ENCODE measurements at regions of chr3 and their contacts with region 1.

Region 1: GRCh38 chr3:156816800-156817645 is 9.1 kb upstream of the LEKR1 start:
- DNase-seq: peak; percentile 94
- ATAC-seq: peak; percentile 85
- H3K4me3 ChIP-seq: peak overlapping the region; percentile 42 to 86 (median 77)
- H3K4me3 Mint-ChIP-seq: peak overlapping the region; percentile 97
- H3K27ac ChIP-seq: peak overlapping the region; percentile 56 to 80
- H3K27ac Mint-ChIP-seq: peak overlapping the region; percentile 99
- H3K4me1 ChIP-seq: peaks cover 13 to 16% of the 10 kb centered on the region in 2 donors
- H3K4me1 Mint-ChIP-seq: peaks cover 43% of the 10 kb centered on the region
- H3K27me3 ChIP-seq: no peaks in the 10 kb centered on the region
- H3K27me3 Mint-ChIP-seq: no peaks in the 10 kb centered on the region
- CTCF ChIP-seq: no peak

Region 2: GRCh38 chr3:155854141-155854940 is 962.7 kb before region 1 on chr3 and contains the start of gene SLC33A1:
- CTCF ChIA-PET with region 1: no interaction called
- POLR2A ChIA-PET with region 1: no interaction called
- intact Hi-C with region 1: loop called (anchors 1 kb)
- DNase-seq: peak; percentile 100
- ATAC-seq: peak; percentile 90
- H3K4me3 ChIP-seq: peak within 1 kb of the TSS; percentile 82 to 99 (median 92)
- H3K4me3 Mint-ChIP-seq: peak within 1 kb of the TSS; percentile 97
- H3K27ac ChIP-seq: peak within 1 kb of the TSS; percentile 90 to 97
- H3K27ac Mint-ChIP-seq: peak within 1 kb of the TSS; percentile 99
- H3K4me1 ChIP-seq: peaks cover 25 to 37% of the 10 kb centered on the region in 2 donors
- H3K4me1 Mint-ChIP-seq: peaks cover 36% of the 10 kb centered on the region
- H3K27me3 ChIP-seq: no peaks in the 10 kb centered on the region
- H3K27me3 Mint-ChIP-seq: no peaks in the 10 kb centered on the region
- CTCF ChIP-seq: no peak
- total RNA-seq, gene SLC33A1: 26.9 and 29.4 TPM in 2 replicates

Region 3: GRCh38 chr3:155870133-155870944 is 946.7 kb before region 1 on chr3 and contains the start of gene GMPS:
- CTCF ChIA-PET with region 1: interaction called, 3 read pairs
- POLR2A ChIA-PET with region 1: no interaction called
- intact Hi-C with region 1: loop called (anchors 2 kb)
- DNase-seq: peak; percentile 96
- ATAC-seq: peak; percentile 95
- H3K4me3 ChIP-seq: peak within 1 kb of the TSS; percentile 65 to 95 (median 93)
- H3K4me3 Mint-ChIP-seq: peak within 1 kb of the TSS; percentile 96
- H3K27ac ChIP-seq: peak within 1 kb of the TSS; percentile 75 to 86
- H3K27ac Mint-ChIP-seq: peak within 1 kb of the TSS; percentile 94
- H3K4me1 ChIP-seq: peaks cover 14 to 19% of the 10 kb centered on the region in 2 donors
- H3K4me1 Mint-ChIP-seq: peaks cover 23% of the 10 kb centered on the region
- H3K27me3 ChIP-seq: no peaks in the 10 kb centered on the region
- H3K27me3 Mint-ChIP-seq: no peaks in the 10 kb centered on the region
- CTCF ChIP-seq: peak; percentile 45
- total RNA-seq, gene GMPS: 28.0 and 30.8 TPM in 2 replicates

Region 4: GRCh38 chr3:156772581-156773206 is 44.3 kb before region 1 on chr3:
- CTCF ChIA-PET with region 1: no interaction called
- POLR2A ChIA-PET with region 1: no interaction called
- intact Hi-C with region 1: no loop called
- DNase-seq: no peak
- ATAC-seq: no peak
- H3K4me3 ChIP-seq: no peak overlapping the region
- H3K4me3 Mint-ChIP-seq: no peak overlapping the region
- H3K27ac ChIP-seq: no peak overlapping the region
- H3K27ac Mint-ChIP-seq: no peak overlapping the region
- H3K4me1 ChIP-seq: no peaks in the 10 kb centered on the region
- H3K4me1 Mint-ChIP-seq: no peaks in the 10 kb centered on the region
- H3K27me3 ChIP-seq: no peaks in the 10 kb centered on the region
- H3K27me3 Mint-ChIP-seq: no peaks in the 10 kb centered on the region
- CTCF ChIP-seq: no peak

Region 5: DNA sequence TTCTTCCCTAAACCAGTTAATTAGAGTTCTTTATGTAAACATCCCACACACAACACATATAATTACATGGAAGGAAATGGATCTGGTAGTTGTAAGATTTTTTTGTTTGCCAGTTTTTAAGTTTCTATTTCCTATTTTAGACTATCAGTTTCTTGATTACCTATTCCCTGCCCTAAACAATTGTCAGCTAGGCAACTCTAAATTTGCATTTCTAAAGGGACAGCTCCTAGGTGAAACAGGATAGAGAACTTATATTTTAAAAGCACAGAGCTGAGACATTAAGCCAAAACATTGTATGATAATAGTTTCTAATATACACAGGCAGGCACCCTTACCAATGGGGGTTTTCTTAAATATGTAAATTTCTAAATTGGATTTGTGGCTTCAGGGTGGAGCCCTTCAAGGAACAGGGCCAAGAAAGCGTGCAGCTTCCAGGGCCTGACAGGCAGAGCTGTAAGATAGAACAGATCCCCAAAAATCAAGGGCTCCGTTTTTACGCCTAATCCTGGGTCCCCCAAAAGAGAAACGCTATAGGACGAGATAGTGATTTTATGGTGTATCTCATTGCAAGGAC is 18.0 kb after region 1 on chr3:
- CTCF ChIA-PET with region 1: no interaction called
- POLR2A ChIA-PET with region 1: no interaction called
- intact Hi-C with region 1: no loop called
- DNase-seq: no peak
- ATAC-seq: no peak
- H3K4me3 ChIP-seq: no peak overlapping the region
- H3K4me3 Mint-ChIP-seq: no peak overlapping the region
- H3K27ac ChIP-seq: no peak overlapping the region
- H3K27ac Mint-ChIP-seq: no peak overlapping the region
- H3K4me1 ChIP-seq: no peaks in the 10 kb centered on the region
- H3K4me1 Mint-ChIP-seq: no peaks in the 10 kb centered on the region
- H3K27me3 ChIP-seq: no peaks in the 10 kb centered on the region
- H3K27me3 Mint-ChIP-seq: no peaks in the 10 kb centered on the region
- CTCF ChIP-seq: no peak

Region 6: GRCh38 chr3:156978481-156978961 is 161.5 kb after region 1 on chr3:
- CTCF ChIA-PET with region 1: no interaction called
- POLR2A ChIA-PET with region 1: interaction called, 4 read pairs
- intact Hi-C with region 1: loop called (anchors 1 kb)
- DNase-seq: peak; percentile 87
- ATAC-seq: peak; percentile 86
- H3K4me3 ChIP-seq: peak overlapping the region in 3 of 5 experiments; percentile 0 to 53 (median 5)
- H3K4me3 Mint-ChIP-seq: peak overlapping the region; percentile 74
- H3K27ac ChIP-seq: peak overlapping the region; percentile 74 to 93
- H3K27ac Mint-ChIP-seq: peak overlapping the region; percentile 97
- H3K4me1 ChIP-seq: peaks cover 36 to 43% of the 10 kb centered on the region in 2 donors
- H3K4me1 Mint-ChIP-seq: peaks cover 51% of the 10 kb centered on the region
- H3K27me3 ChIP-seq: no peaks in the 10 kb centered on the region
- H3K27me3 Mint-ChIP-seq: no peaks in the 10 kb centered on the region
- CTCF ChIP-seq: no peak

Region 7: GRCh38 chr3:157029365-157029790 is 212.4 kb after region 1 on chr3:
- CTCF ChIA-PET with region 1: no interaction called
- POLR2A ChIA-PET with region 1: no interaction called
- intact Hi-C with region 1: loop called (anchors 2 kb)
- DNase-seq: peak; percentile 85
- ATAC-seq: peak; percentile 93
- H3K4me3 ChIP-seq: no peak overlapping the region
- H3K4me3 Mint-ChIP-seq: peak overlapping the region; percentile 44
- H3K27ac ChIP-seq: peak overlapping the region in 1 of 2 donors; percentile 17
- H3K27ac Mint-ChIP-seq: peak overlapping the region; percentile 72
- H3K4me1 ChIP-seq: peaks cover 14 to 26% of the 10 kb centered on the region in 2 donors
- H3K4me1 Mint-ChIP-seq: peaks cover 28% of the 10 kb centered on the region
- H3K27me3 ChIP-seq: no peaks in the 10 kb centered on the region
- H3K27me3 Mint-ChIP-seq: no peaks in the 10 kb centered on the region
- CTCF ChIP-seq: no peak

Region 8: DNA sequence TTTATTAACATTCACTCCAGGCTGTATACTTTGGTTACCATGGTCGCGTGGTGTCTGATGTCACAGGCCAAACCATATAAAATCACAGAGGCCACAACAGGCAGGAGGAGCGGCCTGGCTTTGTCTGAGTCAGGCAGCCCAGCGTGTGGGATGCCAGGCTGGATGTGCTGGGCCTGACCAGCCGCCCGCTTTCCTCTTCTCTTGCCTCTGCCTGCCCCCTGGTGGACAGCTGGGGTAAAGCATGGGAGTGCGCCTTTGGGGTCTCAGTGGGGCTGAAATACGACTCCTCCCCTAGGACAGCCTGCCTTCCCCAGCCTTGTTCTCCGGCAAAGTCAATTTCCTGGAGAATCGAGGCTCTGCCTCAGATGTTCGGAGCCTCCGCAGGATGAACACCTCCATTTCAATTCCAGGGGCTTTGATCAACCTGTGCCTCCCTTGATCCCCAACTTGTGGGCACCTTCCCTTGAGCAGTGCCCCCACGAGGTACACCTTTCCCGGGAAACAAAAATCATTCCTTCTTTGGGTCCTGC is 264.7 kb after region 1 on chr3:
- CTCF ChIA-PET with region 1: interaction called, 9 read pairs
- POLR2A ChIA-PET with region 1: interaction called, 7 read pairs
- intact Hi-C with region 1: loop called (anchors 1 kb)
- DNase-seq: peak; percentile 86
- ATAC-seq: peak; percentile 99
- H3K4me3 ChIP-seq: no peak overlapping the region
- H3K4me3 Mint-ChIP-seq: peak overlapping the region; percentile 2
- H3K27ac ChIP-seq: no peak overlapping the region
- H3K27ac Mint-ChIP-seq: peak overlapping the region; percentile 63
- H3K4me1 ChIP-seq: peaks cover 9 to 11% of the 10 kb centered on the region in 2 donors
- H3K4me1 Mint-ChIP-seq: peaks cover 11% of the 10 kb centered on the region
- H3K27me3 ChIP-seq: peaks cover 0 to 4% (median 0%) of the 10 kb centered on the region in 4 experiments
- H3K27me3 Mint-ChIP-seq: peaks cover 8% of the 10 kb centered on the region
- CTCF ChIP-seq: peak; percentile 96

Region 9: GRCh38 chr3:157088601-157089454 is 271.8 kb after region 1 on chr3:
- CTCF ChIA-PET with region 1: no interaction called
- POLR2A ChIA-PET with region 1: no interaction called
- intact Hi-C with region 1: loop called (anchors 1 kb)
- DNase-seq: peak; percentile 96
- ATAC-seq: peak; percentile 91
- H3K4me3 ChIP-seq: peak overlapping the region; percentile 56 to 92 (median 80)
- H3K4me3 Mint-ChIP-seq: peak overlapping the region; percentile 94
- H3K27ac ChIP-seq: peak overlapping the region; percentile 76 to 98
- H3K27ac Mint-ChIP-seq: peak overlapping the region; percentile 98
- H3K4me1 ChIP-seq: peaks cover 19 to 25% of the 10 kb centered on the region in 2 donors
- H3K4me1 Mint-ChIP-seq: peaks cover 25% of the 10 kb centered on the region
- H3K27me3 ChIP-seq: peaks cover 0 to 2% (median 0%) of the 10 kb centered on the region in 4 experiments
- H3K27me3 Mint-ChIP-seq: peaks cover 8% of the 10 kb centered on the region
- CTCF ChIP-seq: no peak

Measured in B cell (primary cell).